A673 (cell line): ENCODE measurements at regions of chr17 and their contacts with region 1.

Region 1: GRCh38 chr17:66466840-66467367 is 164.5 kb downstream of the PRKCA start:
- DNase-seq: peak; percentile 89
- H3K4me3 ChIP-seq: no peak overlapping the region
- H3K27ac ChIP-seq: peak overlapping the region; percentile 44
- H3K4me1 ChIP-seq: peaks cover 27% of the 10 kb centered on the region
- H3K27me3 ChIP-seq: no peaks in the 10 kb centered on the region
- CTCF ChIP-seq: no peak

Region 2: GRCh38 chr17:66403846-66404556 is 62.9 kb before region 1 on chr17:
- CTCF ChIA-PET with region 1: no interaction called
- POLR2A ChIA-PET with region 1: no interaction called
- intact Hi-C with region 1: no loop called
- DNase-seq: no peak
- H3K4me3 ChIP-seq: no peak overlapping the region
- H3K27ac ChIP-seq: no peak overlapping the region
- H3K4me1 ChIP-seq: peaks cover 37% of the 10 kb centered on the region
- H3K27me3 ChIP-seq: no peaks in the 10 kb centered on the region
- CTCF ChIP-seq: no peak

Region 3: GRCh38 chr17:67466251-67466796 is 999.4 kb after region 1 on chr17:
- CTCF ChIA-PET with region 1: no interaction called
- POLR2A ChIA-PET with region 1: interaction called, 10 read pairs
- intact Hi-C with region 1: no loop called
- DNase-seq: no peak
- H3K4me3 ChIP-seq: no peak overlapping the region
- H3K27ac ChIP-seq: no peak overlapping the region
- H3K4me1 ChIP-seq: peaks cover 25% of the 10 kb centered on the region
- H3K27me3 ChIP-seq: no peaks in the 10 kb centered on the region
- CTCF ChIP-seq: no peak